ENCODE measurements at regions of chr13 and their contacts with region 1.

Region 1: DNA sequence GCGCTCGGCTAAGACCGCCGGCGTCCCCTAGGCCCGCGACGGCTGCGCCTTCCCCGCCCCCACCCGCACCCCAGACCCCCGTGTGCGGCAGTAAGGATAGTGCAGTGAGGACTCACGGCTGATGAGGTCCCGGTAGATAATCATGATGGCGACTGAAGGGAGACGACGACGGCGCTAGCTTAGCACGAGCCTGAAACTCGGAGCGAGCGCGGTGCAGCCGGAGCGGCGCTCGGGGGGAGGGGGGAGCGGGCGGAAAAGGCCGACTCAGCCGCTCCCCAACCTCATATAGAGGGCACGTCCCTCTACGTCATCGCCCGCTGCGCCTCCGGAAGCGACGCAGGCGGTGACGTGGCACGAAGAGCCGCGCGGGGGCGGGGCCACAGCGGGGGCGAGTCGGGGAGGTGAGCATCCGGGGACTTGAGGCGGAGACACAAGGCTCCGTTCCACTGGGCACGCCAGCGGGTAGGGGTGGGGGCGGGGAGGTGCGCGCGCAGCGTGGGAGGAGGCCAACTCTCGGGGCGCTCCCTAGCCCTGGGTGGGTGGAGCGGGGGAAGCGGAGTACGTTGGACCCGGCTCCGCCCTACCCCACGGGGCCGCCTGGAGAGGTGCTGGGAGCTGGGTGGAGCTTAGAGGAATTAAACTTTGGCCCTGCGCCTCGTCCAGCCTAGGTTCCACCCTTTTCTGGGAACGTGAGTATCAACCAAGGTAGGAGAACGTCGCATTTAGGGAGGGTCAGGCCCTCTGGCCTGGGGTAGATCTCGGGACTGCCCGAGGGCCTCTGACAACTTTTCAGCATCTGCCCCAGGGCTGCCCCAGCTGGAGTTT is at the start of gene TPT1:
- DNase-seq: peak; percentile 94 to 99
- H3K4me3 ChIP-seq: peak within 1 kb of the TSS; percentile 95
- H3K27ac ChIP-seq: peak within 1 kb of the TSS; percentile 97
- H3K4me1 ChIP-seq: peaks cover 46% of the 10 kb centered on the region
- H3K27me3 ChIP-seq: no peaks in the 10 kb centered on the region
- CTCF ChIP-seq: no peak
- total RNA-seq, gene TPT1: 1,968 and 2,237 TPM in 2 replicates

Region 2: DNA sequence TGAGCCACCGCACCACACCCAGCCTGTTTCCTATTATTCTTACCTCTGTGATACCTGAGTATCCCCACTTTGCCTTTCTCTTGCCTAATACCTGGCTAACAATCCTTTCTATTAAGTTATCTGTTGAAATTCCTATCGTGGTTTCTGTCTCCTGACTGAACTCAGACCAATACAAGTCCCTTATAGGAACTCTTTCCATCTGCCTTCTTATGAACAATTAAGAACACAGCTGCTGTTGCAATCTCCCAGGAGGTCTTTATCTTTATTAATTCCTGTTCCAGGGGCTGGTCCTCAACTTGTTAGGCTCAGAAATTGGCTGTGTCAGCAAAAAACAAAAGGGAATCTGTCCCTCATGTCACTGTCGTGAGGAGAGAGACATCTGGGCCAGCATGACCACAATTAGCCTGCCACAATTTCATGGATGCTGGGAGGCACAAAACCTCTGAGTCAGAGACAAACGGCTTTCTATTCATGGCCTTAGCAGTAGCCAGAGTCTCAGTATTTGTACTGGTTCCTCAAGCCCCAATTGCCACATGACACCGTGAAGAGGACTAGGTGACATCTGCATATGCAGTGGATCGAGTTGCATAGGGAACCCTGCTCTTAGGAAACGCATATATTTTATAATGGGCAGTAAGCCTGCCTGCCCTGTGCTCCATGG is 410.0 kb before region 1 on chr13:
- CTCF ChIA-PET with region 1: no interaction called
- POLR2A ChIA-PET with region 1: interaction called, 13 read pairs
- intact Hi-C with region 1: no loop called
- DNase-seq: peak; percentile 14 to 77
- H3K4me3 ChIP-seq: no peak overlapping the region
- H3K27ac ChIP-seq: peak overlapping the region; percentile 65
- H3K4me1 ChIP-seq: peaks cover 53% of the 10 kb centered on the region
- H3K27me3 ChIP-seq: no peaks in the 10 kb centered on the region
- CTCF ChIP-seq: no peak

Region 3: GRCh38 chr13:44978328-44978727 is 362.8 kb before region 1 on chr13:
- CTCF ChIA-PET with region 1: interaction called, 10 read pairs
- POLR2A ChIA-PET with region 1: no interaction called
- intact Hi-C with region 1: no loop called
- DNase-seq: no peak
- H3K4me3 ChIP-seq: no peak overlapping the region
- H3K27ac ChIP-seq: no peak overlapping the region
- H3K4me1 ChIP-seq: no peaks in the 10 kb centered on the region
- H3K27me3 ChIP-seq: no peaks in the 10 kb centered on the region
- CTCF ChIP-seq: peak; percentile 21; the same call in 1 of the 2 replicates

Region 4: DNA sequence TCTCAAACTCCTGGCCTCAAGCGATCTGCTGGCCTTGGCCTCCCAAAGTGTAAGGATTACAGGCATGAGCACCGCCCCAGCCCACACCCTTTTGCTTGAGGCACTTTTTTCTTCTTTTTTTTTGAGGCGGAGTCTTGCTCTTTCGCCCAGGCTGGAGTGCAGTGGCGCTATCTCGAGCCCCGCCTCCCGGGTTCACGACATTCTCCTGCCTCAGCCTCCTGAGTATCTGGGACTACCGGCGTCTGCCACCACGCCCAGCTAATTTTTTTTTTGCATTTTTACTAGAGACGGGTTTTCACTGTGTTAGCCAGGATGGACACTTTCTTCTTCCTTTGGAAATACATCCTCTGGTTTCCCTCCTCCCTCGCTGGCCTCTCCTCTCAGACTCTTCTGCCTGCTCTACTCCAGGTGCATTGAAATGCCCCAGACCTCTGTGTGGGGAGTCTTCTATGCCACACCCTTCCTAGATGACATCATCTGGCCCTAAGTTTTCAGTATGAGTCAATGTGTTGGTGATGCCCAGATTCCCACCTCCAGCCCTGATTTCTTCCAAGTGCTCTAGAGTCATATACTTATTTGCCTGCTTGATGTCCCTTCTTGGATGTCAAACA is 20.6 kb after region 1 on chr13:
- CTCF ChIA-PET with region 1: no interaction called
- POLR2A ChIA-PET with region 1: interaction called, 14 read pairs
- intact Hi-C with region 1: loop called (anchors 1 kb)
- DNase-seq: peak; percentile 85 to 89
- H3K4me3 ChIP-seq: peak overlapping the region; percentile 31; the same call in 1 of the 2 replicates
- H3K27ac ChIP-seq: peak overlapping the region; percentile 83
- H3K4me1 ChIP-seq: peaks cover 33% of the 10 kb centered on the region
- H3K27me3 ChIP-seq: no peaks in the 10 kb centered on the region
- CTCF ChIP-seq: no peak

Region 5: DNA sequence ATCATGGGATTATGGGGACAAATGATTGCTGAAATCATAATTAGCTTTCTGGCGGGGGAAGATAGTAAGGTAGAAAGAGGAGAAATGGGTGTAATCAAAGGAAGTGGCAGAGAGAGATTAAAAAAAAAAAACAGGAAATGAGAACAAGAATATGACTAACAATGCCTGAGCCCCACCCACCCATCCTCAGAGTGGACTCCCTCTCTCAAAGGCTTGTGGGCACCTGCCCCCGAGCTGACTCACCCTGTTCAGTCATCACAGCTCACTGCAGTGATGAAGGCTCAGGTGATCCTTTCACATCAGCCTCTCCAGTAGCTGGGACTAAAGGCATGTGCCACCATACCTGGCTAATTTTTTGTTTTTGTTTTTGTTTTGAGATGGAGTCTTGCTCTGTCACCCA is 26.2 kb after region 1 on chr13:
- CTCF ChIA-PET with region 1: interaction called, 4 read pairs
- POLR2A ChIA-PET with region 1: interaction called, 14 read pairs
- intact Hi-C with region 1: loop called (anchors 1 kb)
- DNase-seq: peak; percentile 93 to 95
- H3K4me3 ChIP-seq: no peak overlapping the region
- H3K27ac ChIP-seq: peak overlapping the region; percentile 90
- H3K4me1 ChIP-seq: peaks cover 31% of the 10 kb centered on the region
- H3K27me3 ChIP-seq: no peaks in the 10 kb centered on the region
- CTCF ChIP-seq: no peak

Region 6: GRCh38 chr13:45374917-45375316 is 33.8 kb after region 1 on chr13:
- CTCF ChIA-PET with region 1: no interaction called
- POLR2A ChIA-PET with region 1: interaction called, 12 read pairs
- intact Hi-C with region 1: no loop called
- DNase-seq: no peak
- H3K4me3 ChIP-seq: no peak overlapping the region
- H3K27ac ChIP-seq: no peak overlapping the region
- H3K4me1 ChIP-seq: no peaks in the 10 kb centered on the region
- H3K27me3 ChIP-seq: no peaks in the 10 kb centered on the region
- CTCF ChIP-seq: no peak

Region 7: DNA sequence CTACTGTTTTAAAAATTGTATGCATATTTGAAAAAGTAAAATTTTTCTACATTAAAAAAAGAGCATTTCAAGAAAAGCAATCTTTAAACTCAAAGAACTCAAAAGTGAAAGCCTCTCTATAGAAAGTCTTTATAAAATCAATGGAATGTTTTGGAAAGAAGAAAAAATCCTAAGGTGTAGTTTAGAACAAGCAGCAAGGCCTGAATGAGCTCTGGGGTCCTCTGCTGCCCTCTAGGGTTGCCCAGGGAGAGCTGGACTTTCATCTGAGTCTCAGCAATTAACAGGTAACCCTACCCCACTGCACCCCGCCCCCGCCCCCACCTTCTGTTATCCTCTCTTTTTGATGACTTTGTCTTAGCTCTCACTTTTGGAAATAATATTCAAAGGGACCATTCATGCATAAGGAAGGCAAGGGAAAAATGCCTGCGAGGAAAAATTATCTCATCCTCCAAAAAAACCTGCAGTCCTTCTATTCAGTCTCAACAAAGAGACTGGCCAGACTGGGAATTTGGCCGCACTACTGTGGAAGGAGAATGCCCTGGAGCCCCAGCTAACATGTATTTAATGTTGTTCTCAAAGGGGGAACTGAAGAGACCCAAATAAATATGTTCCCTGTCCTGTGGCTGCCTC is 52.9 kb after region 1 on chr13:
- CTCF ChIA-PET with region 1: no interaction called
- POLR2A ChIA-PET with region 1: interaction called, 4 read pairs
- intact Hi-C with region 1: loop called (anchors 2 kb)
- DNase-seq: peak; percentile 59 to 61
- H3K4me3 ChIP-seq: no peak overlapping the region
- H3K27ac ChIP-seq: no peak overlapping the region
- H3K4me1 ChIP-seq: no peaks in the 10 kb centered on the region
- H3K27me3 ChIP-seq: no peaks in the 10 kb centered on the region
- CTCF ChIP-seq: peak; percentile 74

Measured in PC-9 (cell line).